Tibial artery (tissue), 4 donors: ENCODE measurements at regions of chr4 and their contacts with region 1.

Region 1: DNA sequence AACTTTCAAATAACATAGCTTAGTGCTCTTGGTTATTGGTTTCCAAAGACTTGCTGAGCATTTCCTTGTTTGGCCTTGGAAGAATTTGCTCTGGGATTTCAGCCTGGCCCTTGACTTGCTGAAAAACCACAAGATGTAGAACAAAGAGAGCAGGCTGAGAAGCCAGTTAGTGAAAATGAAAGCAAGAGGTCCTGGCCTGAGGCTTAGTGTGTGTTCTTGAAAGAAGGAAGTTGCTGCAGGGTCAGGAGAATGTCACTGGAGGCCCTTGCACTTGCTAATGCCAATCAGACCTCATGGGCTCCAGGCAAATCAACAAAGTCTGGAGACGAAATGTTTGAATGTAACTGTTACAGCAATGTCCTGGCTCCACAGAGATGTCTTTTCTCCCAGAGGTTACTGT is 79.4 kb downstream of the SYNPO2 start:
- DNase-seq: peak; percentile 84 to 89
- H3K4me3 ChIP-seq: peak overlapping the region in 1 of 2 donors; percentile 2
- H3K27ac ChIP-seq: peak overlapping the region; percentile 73 to 87
- H3K4me1 ChIP-seq: peaks cover 0 to 96% (median 56%) of the 10 kb centered on the region in 4 donors
- H3K27me3 ChIP-seq: no peaks in the 10 kb centered on the region
- CTCF ChIP-seq: no peak

Region 2: DNA sequence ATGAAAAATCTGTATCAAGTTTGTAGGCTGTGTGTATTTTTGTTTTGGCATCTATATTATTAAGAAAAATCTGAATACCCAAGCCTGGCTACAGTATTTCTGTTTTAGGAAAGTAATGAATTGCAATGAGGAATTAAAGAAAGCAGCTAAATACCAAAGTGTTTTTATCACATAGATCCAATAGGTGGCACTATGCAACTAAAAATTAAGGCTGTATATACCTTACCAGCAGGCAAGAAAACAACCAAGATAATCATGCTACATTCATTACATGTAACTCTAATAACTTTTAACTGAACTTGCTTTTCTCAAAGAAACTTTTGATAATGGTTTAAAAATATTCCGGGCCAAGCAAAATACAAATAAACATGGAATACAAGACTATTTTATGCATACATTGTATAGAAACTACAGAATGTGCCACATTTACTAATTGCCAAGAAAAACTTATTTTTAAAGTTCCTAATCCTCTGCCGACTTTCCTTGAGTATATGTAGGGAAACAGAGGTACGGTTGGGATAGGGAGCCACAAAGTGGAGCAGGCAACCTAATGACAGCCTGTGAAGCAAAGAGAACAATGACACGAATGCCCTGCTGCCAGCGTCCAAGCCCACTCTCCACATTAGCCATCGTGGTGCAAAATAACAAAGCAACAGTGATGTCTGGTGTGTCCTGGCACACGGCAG is 195.8 kb before region 1 on chr4:
- intact Hi-C with region 1: loop called (anchors 5 kb)
- DNase-seq: no peak
- H3K4me3 ChIP-seq: peak overlapping the region; percentile 12 to 16
- H3K27ac ChIP-seq: peak overlapping the region; percentile 78 to 81
- H3K4me1 ChIP-seq: peaks cover 0 to 80% (median 46%) of the 10 kb centered on the region in 4 donors
- H3K27me3 ChIP-seq: no peaks in the 10 kb centered on the region
- CTCF ChIP-seq: peak; percentile 56 to 77

Region 3: GRCh38 chr4:118898684-118899138 is 69.3 kb before region 1 on chr4:
- intact Hi-C with region 1: loop called (anchors 5 kb)
- DNase-seq: peak; percentile 67 to 73
- H3K4me3 ChIP-seq: peak overlapping the region in 1 of 2 donors; percentile 10
- H3K27ac ChIP-seq: peak overlapping the region; percentile 77 to 90
- H3K4me1 ChIP-seq: peaks cover 0 to 98% (median 17%) of the 10 kb centered on the region in 4 donors
- H3K27me3 ChIP-seq: no peaks in the 10 kb centered on the region
- CTCF ChIP-seq: no peak

Region 4: GRCh38 chr4:119321921-119322687 is 354.1 kb after region 1 on chr4 and contains the start of gene FABP2:
- intact Hi-C with region 1: no loop called
- DNase-seq: no peak
- H3K4me3 ChIP-seq: no peak within 1 kb of the TSS
- H3K27ac ChIP-seq: no peak within 1 kb of the TSS
- H3K4me1 ChIP-seq: no peaks in the 10 kb centered on the region
- H3K27me3 ChIP-seq: no peaks in the 10 kb centered on the region
- CTCF ChIP-seq: no peak